ENCODE measurements at regions of chr7 and their contacts with region 1.

Region 1: GRCh38 chr7:102125127-102125561 is 161.5 kb upstream of the SH2B2 start:
- DNase-seq: peak; percentile 68 to 90
- H3K4me3 ChIP-seq: no peak overlapping the region
- H3K27ac ChIP-seq: no peak overlapping the region
- H3K4me1 ChIP-seq: peaks cover 14% of the 10 kb centered on the region
- H3K27me3 ChIP-seq: no peaks in the 10 kb centered on the region
- CTCF ChIP-seq: no peak

Region 2: DNA sequence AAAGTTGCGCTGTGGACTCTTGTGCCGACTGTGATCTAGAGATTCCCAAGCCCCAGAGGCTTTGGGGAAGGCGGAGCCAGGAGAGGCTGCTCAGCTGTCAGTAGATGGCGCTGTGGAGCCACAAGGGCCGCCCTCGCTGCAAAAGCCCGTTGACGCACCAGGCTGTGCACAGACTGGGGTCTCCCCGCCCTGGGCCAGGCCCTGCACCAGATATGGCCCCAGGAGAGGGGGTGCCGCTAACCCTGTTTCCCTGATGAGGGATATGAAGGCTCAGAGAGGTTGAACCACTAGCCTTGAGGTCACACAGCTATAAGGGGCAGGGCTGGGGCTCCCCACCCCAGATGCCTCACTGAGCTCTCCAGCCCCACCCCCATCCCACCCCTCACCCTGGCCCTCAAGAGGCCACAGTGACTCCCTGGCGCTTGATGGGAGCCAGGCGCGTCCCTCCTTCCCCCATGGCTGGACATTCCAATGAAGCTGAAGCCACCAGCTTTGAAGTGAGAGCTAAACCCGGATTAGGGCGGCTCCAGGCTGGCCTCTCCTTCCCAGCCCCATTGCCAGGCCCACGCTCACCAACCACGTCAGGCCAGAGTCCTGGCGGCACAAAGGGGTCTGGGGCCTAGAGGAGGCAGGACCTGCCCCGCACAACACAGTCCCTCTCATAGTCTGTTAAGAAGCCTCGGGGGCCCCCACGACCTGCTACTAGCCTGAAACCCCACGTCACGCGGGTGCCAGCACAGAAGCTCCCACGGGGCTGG is 522.5 kb before region 1 on chr7:
- CTCF ChIA-PET with region 1: no interaction called
- POLR2A ChIA-PET with region 1: no interaction called
- intact Hi-C with region 1: loop called (anchors 10 kb)
- DNase-seq: peak; percentile 47 to 83
- H3K4me3 ChIP-seq: no peak overlapping the region
- H3K27ac ChIP-seq: no peak overlapping the region
- H3K4me1 ChIP-seq: no peaks in the 10 kb centered on the region; the same call in 1 of the 2 replicates
- H3K27me3 ChIP-seq: no peaks in the 10 kb centered on the region
- CTCF ChIP-seq: peak; percentile 93

Region 3: DNA sequence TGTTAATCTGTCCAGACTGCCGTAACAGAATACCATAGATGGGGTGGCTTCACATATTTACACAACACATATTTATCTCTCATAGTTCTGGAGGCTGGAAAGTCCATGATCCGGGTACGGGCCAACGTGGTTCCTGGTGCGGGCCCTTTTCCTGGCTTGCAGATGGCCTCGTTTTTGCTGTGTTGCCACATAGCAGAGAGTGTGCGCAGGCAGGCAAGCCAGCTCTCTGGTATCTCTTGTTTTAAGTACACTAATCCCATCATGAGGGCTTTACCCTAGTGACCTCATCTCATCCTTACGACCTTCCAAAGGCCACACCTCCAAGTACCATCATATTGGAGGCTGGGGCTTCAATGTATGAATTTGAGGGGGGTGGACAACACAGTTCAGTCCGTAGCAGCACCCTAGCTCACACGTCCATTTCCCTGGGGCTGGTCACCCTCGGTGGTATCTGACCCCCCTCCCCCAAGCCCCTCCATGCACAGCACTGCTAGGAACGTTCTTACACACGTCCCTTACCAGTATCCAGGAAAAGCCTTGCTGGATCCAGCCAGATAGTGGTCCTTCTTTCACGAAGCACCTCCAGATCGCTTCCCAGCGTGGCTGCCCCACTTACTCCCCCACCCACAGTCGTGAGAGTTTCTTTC is 286.2 kb before region 1 on chr7:
- CTCF ChIA-PET with region 1: no interaction called
- POLR2A ChIA-PET with region 1: interaction called, 16 read pairs
- intact Hi-C with region 1: no loop called
- DNase-seq: no peak
- H3K4me3 ChIP-seq: no peak overlapping the region
- H3K27ac ChIP-seq: no peak overlapping the region
- H3K4me1 ChIP-seq: no peaks in the 10 kb centered on the region
- H3K27me3 ChIP-seq: no peaks in the 10 kb centered on the region
- CTCF ChIP-seq: no peak

Region 4: GRCh38 chr7:101941481-101942383 is 183.4 kb before region 1 on chr7:
- CTCF ChIA-PET with region 1: no interaction called
- POLR2A ChIA-PET with region 1: no interaction called
- intact Hi-C with region 1: loop called (anchors 1 kb)
- DNase-seq: peak; percentile 76 to 89
- H3K4me3 ChIP-seq: no peak overlapping the region; the same call in 1 of the 2 replicates
- H3K27ac ChIP-seq: peak overlapping the region; percentile 84
- H3K4me1 ChIP-seq: peaks cover 34% of the 10 kb centered on the region
- H3K27me3 ChIP-seq: no peaks in the 10 kb centered on the region
- CTCF ChIP-seq: no peak

Region 5: DNA sequence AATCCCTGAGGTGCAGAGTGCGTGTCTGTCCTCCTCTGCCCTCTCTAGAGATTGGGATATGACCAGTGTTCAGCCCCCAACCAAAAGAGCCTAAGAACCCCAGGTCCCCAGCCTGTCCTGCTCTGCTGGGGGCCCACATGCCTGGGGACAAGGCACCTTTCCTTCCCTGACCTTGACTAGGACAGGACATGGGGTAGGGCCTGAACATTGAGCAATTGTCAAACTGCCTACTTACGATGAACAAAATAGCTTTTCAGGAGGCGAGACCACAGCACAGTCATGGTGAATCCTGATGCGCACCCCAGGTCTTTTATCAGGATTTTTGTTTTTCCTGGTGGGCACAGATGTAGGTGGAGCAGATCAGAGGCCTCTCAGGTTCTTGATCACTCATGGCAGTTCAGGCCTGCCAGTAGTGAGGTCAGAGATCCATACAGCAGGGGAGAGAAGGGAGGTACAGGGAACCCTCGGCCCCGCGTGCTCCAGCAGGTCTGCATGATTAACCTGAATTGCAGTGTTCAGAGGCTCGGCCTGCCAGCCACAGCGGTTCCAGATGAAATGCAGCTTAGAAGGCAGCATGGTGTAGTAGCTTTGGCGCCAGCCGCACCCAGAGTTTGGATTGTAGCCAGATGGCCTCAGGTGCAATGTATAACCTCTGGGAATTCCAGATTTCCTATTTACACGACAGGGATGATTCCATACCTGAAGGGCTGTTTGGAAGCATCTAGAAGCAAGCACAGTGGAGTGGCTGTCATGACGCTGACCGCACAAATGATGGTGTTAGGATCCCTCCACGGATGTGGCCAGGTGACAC is 116.4 kb before region 1 on chr7:
- CTCF ChIA-PET with region 1: no interaction called
- POLR2A ChIA-PET with region 1: no interaction called
- intact Hi-C with region 1: no loop called
- DNase-seq: peak in 1 of 2 experiments; percentile 79
- H3K4me3 ChIP-seq: no peak overlapping the region
- H3K27ac ChIP-seq: no peak overlapping the region
- H3K4me1 ChIP-seq: no peaks in the 10 kb centered on the region
- H3K27me3 ChIP-seq: no peaks in the 10 kb centered on the region
- CTCF ChIP-seq: no peak

Region 6: DNA sequence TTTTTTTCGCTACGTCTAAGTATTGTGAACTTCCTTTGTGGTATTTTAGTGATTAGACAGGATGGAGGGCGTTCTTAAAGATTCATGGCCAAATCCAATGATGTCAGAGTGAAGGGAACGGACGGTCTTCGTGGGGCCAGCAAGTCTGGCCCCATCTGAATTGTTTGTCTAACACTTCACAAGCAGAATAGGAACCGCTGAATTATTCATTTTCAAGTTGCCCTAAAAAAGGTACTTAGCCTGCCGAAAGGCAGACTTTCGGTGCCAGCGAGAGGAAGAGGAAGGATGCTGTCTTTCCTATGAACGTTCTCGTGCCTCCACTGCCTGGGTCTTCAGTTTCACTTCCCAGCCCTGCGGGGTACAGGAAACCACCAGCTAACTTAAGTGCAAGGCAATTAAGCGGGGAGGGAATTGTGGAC is 15.8 kb after region 1 on chr7:
- CTCF ChIA-PET with region 1: interaction called, 10 read pairs
- POLR2A ChIA-PET with region 1: no interaction called
- intact Hi-C with region 1: no loop called
- DNase-seq: no peak
- H3K4me3 ChIP-seq: no peak overlapping the region
- H3K27ac ChIP-seq: no peak overlapping the region
- H3K4me1 ChIP-seq: no peaks in the 10 kb centered on the region
- H3K27me3 ChIP-seq: no peaks in the 10 kb centered on the region
- CTCF ChIP-seq: no peak